A549 (cell line): ENCODE measurements at regions of chr20 and their contacts with region 1.

Region 1: DNA sequence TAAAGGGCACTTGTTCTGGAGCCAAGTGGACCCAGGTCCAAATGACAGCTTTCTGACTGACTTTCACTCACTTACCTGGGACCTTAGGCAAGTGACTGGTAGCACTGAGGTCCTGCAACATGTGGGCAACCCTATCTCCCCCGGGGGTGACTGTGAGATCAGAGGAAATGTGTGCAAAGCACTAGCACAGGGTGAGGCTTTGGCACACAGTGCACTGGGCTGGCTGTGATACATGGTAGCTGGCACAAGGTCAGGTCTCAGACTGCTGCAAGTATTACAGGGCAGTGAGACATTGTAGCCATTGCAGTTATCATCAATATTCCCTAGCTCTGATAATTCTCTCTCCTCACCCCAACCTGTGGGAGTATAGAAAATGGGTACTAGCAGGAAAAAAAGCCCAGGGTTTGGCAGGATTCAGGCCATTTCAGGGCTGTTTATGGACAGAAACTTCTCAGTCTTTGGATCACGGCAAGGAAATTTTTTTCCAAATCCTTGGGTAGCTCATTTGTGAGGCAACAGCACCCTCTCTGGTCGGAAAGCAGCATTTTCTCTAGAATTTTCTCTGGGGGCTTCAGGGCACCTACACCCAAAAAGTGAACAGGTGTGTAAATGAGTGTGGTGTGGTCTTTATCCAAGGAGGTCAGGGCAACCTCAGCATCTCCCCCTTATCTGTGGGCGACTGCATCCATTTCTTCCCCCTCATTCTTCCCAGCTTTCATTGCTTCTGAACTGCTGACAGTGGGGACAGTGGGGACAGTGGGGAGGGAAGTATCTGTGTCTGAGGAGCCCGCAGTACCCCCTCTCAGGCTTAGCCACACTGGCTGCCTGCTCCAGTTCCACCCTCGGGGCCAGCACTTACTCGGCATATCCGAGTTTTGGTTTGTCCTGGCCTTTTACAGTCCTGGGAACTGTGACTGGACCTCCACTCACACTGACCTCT is 148.7 kb upstream of the PHACTR3 start:
- DNase-seq: peak; percentile 33
- ATAC-seq: peak; percentile 64 to 81; a peak in 5 of 6 replicates
- H3K4me3 ChIP-seq: no peak overlapping the region
- H3K27ac ChIP-seq: no peak overlapping the region
- H3K4me1 ChIP-seq: no peaks in the 10 kb centered on the region
- CTCF ChIP-seq: peak; percentile 84
- EP300 ChIP-seq: no peak
- POLR2A ChIP-seq: no peak
- RAD21 ChIP-seq: peak; percentile 87 to 89

Region 2: DNA sequence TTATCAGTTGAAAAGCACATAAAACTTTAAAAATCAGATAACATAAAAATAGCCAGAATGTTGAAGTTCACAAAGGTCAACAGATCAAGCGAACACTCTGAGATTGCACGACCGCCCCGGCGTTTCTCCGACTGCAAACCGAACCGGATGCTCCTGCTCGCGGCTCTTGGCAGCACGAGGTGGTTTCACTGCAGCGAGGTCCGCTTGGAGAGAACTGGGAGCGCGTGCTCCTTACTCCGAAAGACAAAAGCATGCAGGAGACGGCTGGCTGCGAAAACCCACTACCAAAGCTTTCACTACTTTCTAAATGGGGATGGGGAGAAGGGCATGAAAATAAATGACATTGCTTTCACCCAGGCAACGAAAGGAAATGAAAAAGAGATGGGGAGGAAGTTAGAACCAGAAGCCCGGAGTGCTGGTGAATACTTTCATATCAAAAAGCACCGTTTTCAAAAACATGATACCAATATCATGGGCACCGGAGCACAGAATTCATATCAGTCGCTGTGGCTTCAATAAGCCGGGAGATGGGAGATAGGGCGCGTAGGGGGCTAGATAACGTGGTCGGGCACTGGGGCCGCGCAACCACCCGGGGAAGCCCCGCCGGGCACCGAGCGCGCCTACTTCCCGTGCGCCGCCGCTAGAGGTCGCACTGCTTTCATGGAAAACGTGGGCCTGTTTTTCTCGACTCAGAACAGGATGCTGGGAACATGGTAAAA is 1218.9 kb before region 1 on chr20:
- CTCF ChIA-PET with region 1: interaction called, 13 read pairs
- POLR2A ChIA-PET with region 1: no interaction called
- DNase-seq: peak; percentile 67 to 84
- ATAC-seq: peak; percentile 94 to 95
- H3K4me3 ChIP-seq: peak overlapping the region; percentile 53
- H3K27ac ChIP-seq: peak overlapping the region; percentile 52 to 74; a peak in 5 of 6 replicates
- H3K4me1 ChIP-seq: peaks cover 4% of the 10 kb centered on the region; the same call in 1 of the 3 replicates
- CTCF ChIP-seq: peak; percentile 93
- EP300 ChIP-seq: no peak
- POLR2A ChIP-seq: no peak
- RAD21 ChIP-seq: peak; percentile 89 to 93

Region 3: GRCh38 chr20:58870239-58871014 is 585.2 kb before region 1 on chr20:
- CTCF ChIA-PET with region 1: interaction called, 56 read pairs
- POLR2A ChIA-PET with region 1: no interaction called
- DNase-seq: peak; percentile 63 to 78
- ATAC-seq: peak; percentile 93 to 98
- H3K4me3 ChIP-seq: no peak overlapping the region
- H3K27ac ChIP-seq: no peak overlapping the region
- H3K4me1 ChIP-seq: no peaks in the 10 kb centered on the region
- CTCF ChIP-seq: peak; percentile 85
- EP300 ChIP-seq: no peak
- POLR2A ChIP-seq: no peak
- RAD21 ChIP-seq: peak; percentile 88 to 89

Region 4: DNA sequence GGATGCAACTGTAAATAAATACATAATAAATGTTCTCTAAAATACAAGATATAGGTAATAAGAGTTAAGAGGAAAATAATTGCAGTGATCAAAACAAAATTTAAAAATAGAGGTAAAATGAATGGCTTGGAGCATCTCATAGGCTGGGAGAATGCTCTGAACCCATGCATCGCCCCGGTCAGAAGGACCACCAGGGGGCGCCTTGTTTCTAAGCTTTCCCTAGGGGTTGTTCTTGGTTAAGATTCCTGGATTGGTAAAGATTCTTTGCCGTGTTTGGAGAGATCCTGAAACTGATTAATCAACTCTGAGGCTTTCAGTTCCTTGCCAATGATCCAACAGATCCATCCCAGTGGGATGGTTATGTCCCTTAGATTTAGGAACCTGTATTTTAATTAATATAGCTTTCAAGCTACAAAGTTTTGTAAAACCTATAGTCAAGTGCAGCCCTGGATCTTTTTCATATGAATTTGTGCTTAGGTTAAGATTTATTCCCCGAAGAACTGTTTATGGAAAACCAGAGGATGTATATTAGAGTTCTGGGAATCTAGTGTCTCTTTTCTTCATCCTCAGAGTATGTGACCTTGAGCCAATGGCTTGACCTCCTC is 367.7 kb before region 1 on chr20:
- CTCF ChIA-PET with region 1: interaction called, 21 read pairs
- POLR2A ChIA-PET with region 1: no interaction called
- DNase-seq: peak; percentile 66 to 70
- ATAC-seq: peak; percentile 89 to 97; a peak in 5 of 6 replicates
- H3K4me3 ChIP-seq: no peak overlapping the region
- H3K27ac ChIP-seq: no peak overlapping the region
- H3K4me1 ChIP-seq: no peaks in the 10 kb centered on the region
- CTCF ChIP-seq: peak; percentile 84
- EP300 ChIP-seq: no peak
- POLR2A ChIP-seq: no peak
- RAD21 ChIP-seq: peak; percentile 83 to 88

Region 5: GRCh38 chr20:59403261-59403961 is 52.3 kb before region 1 on chr20:
- CTCF ChIA-PET with region 1: interaction called, 29 read pairs
- POLR2A ChIA-PET with region 1: no interaction called
- DNase-seq: peak; percentile 29 to 75
- ATAC-seq: peak; percentile 75 to 93; a peak in 4 of 6 replicates
- H3K4me3 ChIP-seq: peak overlapping the region; percentile 28; the same call in 2 of the 3 replicates
- H3K27ac ChIP-seq: peak overlapping the region; percentile 79 to 80
- H3K4me1 ChIP-seq: peaks cover 27% of the 10 kb centered on the region
- CTCF ChIP-seq: peak; percentile 94
- EP300 ChIP-seq: no peak
- POLR2A ChIP-seq: no peak
- RAD21 ChIP-seq: peak; percentile 92 to 99

Region 6: GRCh38 chr20:59472059-59472458 is 16.4 kb after region 1 on chr20:
- CTCF ChIA-PET with region 1: interaction called, 12 read pairs
- POLR2A ChIA-PET with region 1: no interaction called
- DNase-seq: no peak
- ATAC-seq: no peak
- H3K4me3 ChIP-seq: no peak overlapping the region
- H3K27ac ChIP-seq: no peak overlapping the region
- H3K4me1 ChIP-seq: no peaks in the 10 kb centered on the region
- CTCF ChIP-seq: no peak
- EP300 ChIP-seq: no peak
- POLR2A ChIP-seq: no peak
- RAD21 ChIP-seq: no peak

Region 7: GRCh38 chr20:59948828-59949720 is 493.4 kb after region 1 on chr20:
- CTCF ChIA-PET with region 1: no interaction called
- POLR2A ChIA-PET with region 1: no interaction called
- DNase-seq: peak in 1 of 2 experiments; percentile 57
- ATAC-seq: peak; percentile 66 to 69; a peak in 4 of 6 replicates
- H3K4me3 ChIP-seq: no peak overlapping the region
- H3K27ac ChIP-seq: no peak overlapping the region
- H3K4me1 ChIP-seq: 0 out of 3 replicates have a peak, but pooled peaks cover 3% of the 10 kb centered on the region
- CTCF ChIP-seq: peak; percentile 72
- EP300 ChIP-seq: no peak
- POLR2A ChIP-seq: no peak
- RAD21 ChIP-seq: peak; percentile 63 to 67

Region 8: DNA sequence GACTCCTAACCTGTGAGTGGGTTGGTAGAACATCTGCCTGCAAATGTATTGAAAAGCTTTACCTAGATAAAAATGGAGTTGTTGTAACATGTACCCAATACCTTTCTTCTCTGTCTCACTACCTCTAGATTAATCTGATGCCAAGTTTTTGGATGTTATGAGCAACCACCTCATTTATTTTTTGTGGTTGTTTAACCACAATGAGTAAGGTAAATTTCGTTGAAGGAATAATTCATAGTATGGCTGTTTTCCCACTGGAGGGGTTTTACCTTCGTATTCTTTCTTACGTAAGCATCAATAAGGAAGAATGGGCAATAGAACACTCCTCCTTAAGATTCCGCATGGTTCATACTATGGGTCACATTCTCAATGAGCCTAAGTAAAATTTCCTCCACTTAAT is 668.0 kb after region 1 on chr20:
- CTCF ChIA-PET with region 1: no interaction called
- POLR2A ChIA-PET with region 1: no interaction called
- DNase-seq: no peak
- ATAC-seq: no peak
- H3K4me3 ChIP-seq: no peak overlapping the region
- H3K27ac ChIP-seq: no peak overlapping the region
- H3K4me1 ChIP-seq: no peaks in the 10 kb centered on the region
- CTCF ChIP-seq: no peak
- EP300 ChIP-seq: no peak
- POLR2A ChIP-seq: no peak
- RAD21 ChIP-seq: no peak